AG04449 (cell line): ENCODE measurements at regions of chr7 and their contacts with region 1.

Region 1: DNA sequence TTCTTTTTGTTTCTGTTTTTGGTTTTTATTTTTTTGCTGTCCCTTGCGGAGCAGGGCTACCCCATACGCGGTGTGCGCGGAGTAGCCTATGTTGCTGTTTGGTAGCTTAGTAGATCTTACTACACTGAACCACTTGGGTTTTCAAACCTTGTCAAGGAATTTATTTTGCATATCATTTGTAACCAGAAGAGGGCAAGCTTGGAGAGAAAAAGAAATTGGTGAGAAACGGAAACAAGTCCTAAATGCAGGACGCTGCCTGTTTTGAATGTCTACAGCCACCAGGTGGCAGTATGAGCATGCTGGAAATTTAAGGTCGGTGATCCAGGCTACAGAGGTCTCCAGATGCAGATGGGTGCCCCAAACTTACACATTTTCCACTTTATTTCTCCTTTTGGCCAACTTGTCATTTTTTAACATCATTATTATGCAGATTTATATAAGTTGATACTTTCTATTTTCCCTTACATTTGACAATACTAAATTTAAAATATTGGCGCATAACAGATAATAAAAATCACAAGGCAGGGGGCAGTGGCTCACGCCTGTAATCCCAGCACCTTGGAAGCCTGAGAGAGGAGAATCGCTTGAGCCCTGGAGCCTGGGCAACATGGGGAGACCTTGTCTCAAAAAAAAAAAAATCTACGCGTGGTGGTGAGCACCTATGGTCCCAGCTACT is 15.3 kb upstream of the TRA2A start:
- DNase-seq: peak; percentile 62
- H3K4me3 ChIP-seq: no peak overlapping the region
- CTCF ChIP-seq: peak; percentile 81

Region 2: GRCh38 chr7:23261843-23262452 is 285.1 kb before region 1 on chr7:
- CTCF ChIA-PET with region 1: interaction called, 22 read pairs
- POLR2A ChIA-PET with region 1: no interaction called
- DNase-seq: no peak
- H3K4me3 ChIP-seq: no peak overlapping the region
- CTCF ChIP-seq: peak; percentile 89

Region 3: GRCh38 chr7:23531794-23532489 is 15.1 kb before region 1 on chr7 and contains the start of gene TRA2A:
- CTCF ChIA-PET with region 1: interaction called, 25 read pairs
- POLR2A ChIA-PET with region 1: no interaction called
- DNase-seq: peak; percentile 47
- H3K4me3 ChIP-seq: peak within 1 kb of the TSS; percentile 98
- CTCF ChIP-seq: no peak

Region 4: GRCh38 chr7:23558303-23558702 is 11.3 kb after region 1 on chr7:
- CTCF ChIA-PET with region 1: interaction called, 12 read pairs
- POLR2A ChIA-PET with region 1: no interaction called
- DNase-seq: no peak
- H3K4me3 ChIP-seq: no peak overlapping the region
- CTCF ChIP-seq: no peak

Region 5: GRCh38 chr7:23696916-23697441 is 149.9 kb after region 1 on chr7:
- CTCF ChIA-PET with region 1: interaction called, 13 read pairs
- POLR2A ChIA-PET with region 1: no interaction called
- DNase-seq: no peak
- H3K4me3 ChIP-seq: no peak overlapping the region
- CTCF ChIP-seq: peak; percentile 66

Region 6: GRCh38 chr7:23712368-23713284 is 165.6 kb after region 1 on chr7:
- CTCF ChIA-PET with region 1: interaction called, 110 read pairs
- POLR2A ChIA-PET with region 1: no interaction called
- DNase-seq: peak; percentile 29
- H3K4me3 ChIP-seq: no peak overlapping the region
- CTCF ChIP-seq: no peak

Region 7: DNA sequence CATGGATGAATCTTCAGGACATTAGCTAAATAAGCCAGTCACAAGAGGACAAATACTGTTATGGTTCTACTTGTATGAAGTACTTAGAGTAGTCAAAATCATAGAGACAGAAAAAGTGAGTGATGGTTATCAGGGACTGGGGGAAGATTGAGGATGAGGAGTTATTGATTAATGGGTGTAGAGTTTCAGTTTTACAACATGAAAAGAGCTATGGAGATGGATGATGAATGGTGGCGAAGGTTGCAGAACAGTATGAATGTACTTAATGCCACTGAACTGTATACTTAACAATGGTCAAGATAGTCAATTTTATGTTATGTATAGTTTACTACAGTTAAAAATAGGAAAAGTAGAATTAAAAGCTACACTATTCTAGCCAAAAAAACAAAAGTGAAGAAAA is 170.8 kb after region 1 on chr7:
- CTCF ChIA-PET with region 1: interaction called, 110 read pairs
- POLR2A ChIA-PET with region 1: no interaction called
- DNase-seq: no peak
- H3K4me3 ChIP-seq: no peak overlapping the region
- CTCF ChIP-seq: no peak